ENCODE measurements at regions of chr7 and their contacts with region 1.

Region 1: DNA sequence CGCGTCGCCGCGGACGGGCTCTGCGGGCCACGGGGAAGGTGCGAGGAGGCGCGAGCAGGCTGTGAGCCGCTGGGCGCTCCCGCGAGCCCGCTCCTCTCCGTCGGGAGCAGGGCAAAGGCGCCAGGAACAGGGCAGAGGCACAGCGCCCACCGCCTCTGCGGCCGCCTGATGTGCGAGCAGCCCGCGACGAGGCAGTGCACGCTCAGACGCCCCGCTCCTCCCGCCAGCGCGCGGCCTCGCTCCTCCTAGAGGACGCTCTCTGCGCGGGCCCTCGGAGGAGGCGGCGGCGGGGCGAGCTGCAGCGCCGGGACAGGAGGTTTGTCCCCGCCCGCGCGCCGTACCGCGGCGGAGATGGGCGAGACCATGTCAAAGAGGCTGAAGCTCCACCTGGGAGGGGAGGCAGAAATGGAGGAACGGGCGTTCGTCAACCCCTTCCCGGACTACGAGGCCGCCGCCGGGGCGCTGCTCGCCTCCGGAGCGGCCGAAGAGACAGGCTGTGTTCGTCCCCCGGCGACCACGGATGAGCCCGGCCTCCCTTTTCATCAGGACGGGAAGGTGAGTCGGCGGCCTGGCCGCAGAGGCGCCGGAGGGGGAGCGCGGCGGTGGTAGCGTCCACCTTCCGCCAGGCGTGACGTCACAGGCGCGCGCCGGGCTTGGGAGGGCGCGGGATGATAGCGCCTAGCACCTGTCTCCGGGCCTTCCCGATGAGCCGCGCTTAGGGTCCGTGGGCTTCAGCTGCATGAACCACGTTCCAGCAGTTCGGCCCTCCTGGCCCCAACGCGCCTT is 731 bp downstream of the LANCL2 start:
- DNase-seq: peak; percentile 94
- H3K4me3 Mint-ChIP-seq: peak overlapping the region; percentile 97
- H3K27ac Mint-ChIP-seq: peak overlapping the region; percentile 98
- H3K4me1 Mint-ChIP-seq: peaks cover 18% of the 10 kb centered on the region
- H3K27me3 Mint-ChIP-seq: peaks cover 3% of the 10 kb centered on the region

Region 2: DNA sequence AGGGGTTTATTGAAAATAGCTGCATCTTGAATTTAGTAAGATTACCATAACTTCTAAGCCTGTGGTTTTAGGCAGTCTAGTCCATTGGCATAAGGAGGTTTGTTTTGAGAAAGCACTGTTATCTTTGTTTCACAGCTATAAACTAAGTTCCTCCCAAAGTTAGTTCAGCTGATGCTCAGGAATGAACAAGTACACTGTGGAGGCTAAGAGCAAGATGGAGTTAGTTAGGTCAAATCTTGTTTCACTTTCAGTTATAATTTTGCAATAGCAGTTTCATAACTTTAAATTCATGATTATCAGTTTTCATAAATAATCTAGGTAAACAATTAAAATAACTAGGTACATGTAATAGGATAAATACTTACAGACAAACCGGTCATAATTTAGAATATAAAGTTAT is 622.3 kb before region 1 on chr7:
- intact Hi-C with region 1: no loop called
- DNase-seq: no peak
- H3K4me3 Mint-ChIP-seq: no peak overlapping the region
- H3K27ac Mint-ChIP-seq: no peak overlapping the region
- H3K4me1 Mint-ChIP-seq: no peaks in the 10 kb centered on the region
- H3K27me3 Mint-ChIP-seq: no peaks in the 10 kb centered on the region

Region 3: GRCh38 chr7:54758702-54759592 is 606.9 kb before region 1 on chr7 and contains the start of gene SEC61G:
- intact Hi-C with region 1: loop called (anchors 5 kb)
- DNase-seq: peak; percentile 94
- H3K4me3 Mint-ChIP-seq: peak within 1 kb of the TSS; percentile 100
- H3K27ac Mint-ChIP-seq: peak within 1 kb of the TSS; percentile 97
- H3K4me1 Mint-ChIP-seq: peaks cover 32% of the 10 kb centered on the region
- H3K27me3 Mint-ChIP-seq: peaks cover 19% of the 10 kb centered on the region
- total RNA-seq, gene SEC61G: 194 and 200 TPM in 2 replicates

Region 4: GRCh38 chr7:55309040-55309991 is 56.6 kb before region 1 on chr7:
- intact Hi-C with region 1: loop called (anchors 1 kb)
- DNase-seq: peak; percentile 60
- H3K4me3 Mint-ChIP-seq: no peak overlapping the region
- H3K27ac Mint-ChIP-seq: peak overlapping the region; percentile 60
- H3K4me1 Mint-ChIP-seq: peaks cover 31% of the 10 kb centered on the region
- H3K27me3 Mint-ChIP-seq: peaks cover 11% of the 10 kb centered on the region

Region 5: GRCh38 chr7:55339033-55340000 is 26.6 kb before region 1 on chr7:
- intact Hi-C with region 1: no loop called
- DNase-seq: no peak
- H3K4me3 Mint-ChIP-seq: no peak overlapping the region
- H3K27ac Mint-ChIP-seq: no peak overlapping the region
- H3K4me1 Mint-ChIP-seq: no peaks in the 10 kb centered on the region
- H3K27me3 Mint-ChIP-seq: peaks cover 14% of the 10 kb centered on the region

Region 6: GRCh38 chr7:55415173-55415778 is 49.4 kb after region 1 on chr7:
- intact Hi-C with region 1: loop called (anchors 5 kb)
- DNase-seq: peak; percentile 58
- H3K4me3 Mint-ChIP-seq: no peak overlapping the region
- H3K27ac Mint-ChIP-seq: no peak overlapping the region
- H3K4me1 Mint-ChIP-seq: peaks cover 2% of the 10 kb centered on the region
- H3K27me3 Mint-ChIP-seq: no peaks in the 10 kb centered on the region

Region 7: GRCh38 chr7:55572378-55573233 is 206.7 kb after region 1 on chr7 and contains the start of gene VOPP1:
- intact Hi-C with region 1: loop called (anchors 5 kb)
- DNase-seq: peak; percentile 50
- H3K4me3 Mint-ChIP-seq: peak within 1 kb of the TSS; percentile 87
- H3K27ac Mint-ChIP-seq: peak within 1 kb of the TSS; percentile 90
- H3K4me1 Mint-ChIP-seq: peaks cover 51% of the 10 kb centered on the region
- H3K27me3 Mint-ChIP-seq: no peaks in the 10 kb centered on the region
- total RNA-seq, gene VOPP1: 53.7 and 56.0 TPM in 2 replicates

Region 8: DNA sequence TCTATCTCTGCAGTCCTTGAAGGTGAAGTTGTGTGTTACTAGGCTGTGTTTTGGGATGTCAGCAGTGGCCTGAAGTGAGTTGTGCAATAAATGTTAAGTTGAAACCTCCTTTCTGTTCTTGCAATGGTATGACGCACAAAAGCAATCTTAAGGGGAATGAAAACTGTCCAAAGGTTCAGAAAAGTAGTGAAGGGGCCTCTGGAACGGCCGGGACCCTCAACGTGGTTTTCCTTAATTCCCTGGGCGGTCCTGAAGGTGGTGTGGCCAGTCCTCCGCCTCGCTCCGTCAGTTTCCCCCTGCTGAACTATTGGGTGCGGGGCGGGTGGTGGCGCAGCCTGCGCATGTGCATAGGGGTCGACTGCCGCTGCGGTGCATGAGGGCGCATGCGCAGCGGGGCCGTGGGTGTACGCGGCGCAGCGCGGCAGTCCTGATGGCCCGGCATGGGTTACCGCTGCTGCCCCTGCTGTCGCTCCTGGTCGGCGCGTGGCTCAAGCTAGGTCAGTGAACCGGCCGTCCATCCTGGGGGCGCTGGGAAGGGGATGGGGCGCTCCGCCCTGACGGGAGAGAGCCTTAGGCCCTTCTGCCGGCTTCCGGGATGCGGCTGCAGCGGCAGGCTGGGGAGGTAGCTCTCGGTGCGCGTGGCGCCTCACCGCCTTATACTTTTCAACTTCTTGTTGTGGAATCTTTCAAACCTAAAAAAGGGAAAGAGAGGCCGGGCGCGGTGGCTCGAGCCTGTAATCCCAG is 698.2 kb after region 1 on chr7 and contains the start of gene SUMF2:
- intact Hi-C with region 1: loop called (anchors 5 kb)
- DNase-seq: peak; percentile 85
- H3K4me3 Mint-ChIP-seq: peak within 1 kb of the TSS; percentile 90
- H3K27ac Mint-ChIP-seq: peak within 1 kb of the TSS; percentile 78
- H3K4me1 Mint-ChIP-seq: peaks cover 38% of the 10 kb centered on the region
- H3K27me3 Mint-ChIP-seq: no peaks in the 10 kb centered on the region
- total RNA-seq, gene SUMF2: 153 and 158 TPM in 2 replicates